ENCODE measurements at regions of chr13 and their contacts with region 1.

Region 1: DNA sequence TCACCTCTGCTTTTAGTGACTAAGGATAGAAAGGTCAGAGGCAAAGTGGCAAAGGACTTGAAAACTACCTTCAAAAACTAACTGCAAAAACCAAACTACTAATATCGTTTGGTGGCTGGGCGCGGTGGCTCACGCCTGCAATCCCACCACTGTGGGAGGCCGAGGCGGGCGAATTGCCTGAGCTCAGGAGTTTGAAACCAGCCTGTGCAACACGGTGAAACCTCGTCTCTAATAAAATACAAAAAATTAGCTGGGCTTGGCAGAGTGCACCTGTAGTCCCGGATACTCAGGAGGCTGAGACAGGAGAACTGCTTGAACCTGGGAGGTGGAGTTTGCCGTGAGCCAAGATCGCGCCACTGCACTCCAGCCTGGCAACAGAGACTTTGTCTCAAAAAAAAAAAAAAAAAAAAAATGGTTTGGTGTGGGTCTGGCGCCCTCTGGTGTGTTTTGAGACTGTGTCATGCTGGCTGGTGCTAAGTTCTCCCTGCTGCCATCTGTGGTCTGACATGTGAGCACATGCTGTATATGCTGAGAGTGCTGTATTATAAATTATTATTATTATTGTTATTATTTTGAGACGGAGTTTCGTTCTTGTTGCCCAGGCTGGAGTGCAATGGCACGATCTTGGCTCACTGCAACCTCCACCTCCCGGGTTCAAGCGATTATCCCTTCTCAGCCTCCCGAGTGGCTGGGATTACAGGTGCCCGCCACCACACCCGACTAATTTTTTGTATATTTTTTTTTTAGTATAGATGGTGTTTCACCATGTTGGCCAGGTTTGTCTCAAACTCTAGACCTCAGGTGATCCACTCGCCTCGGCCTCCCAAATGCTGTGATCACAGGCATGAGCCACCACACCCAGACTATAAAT is 36.0 kb upstream of the RNF17 start:
- DNase-seq: peak; percentile 51 to 59
- H3K4me3 ChIP-seq: no peak overlapping the region
- H3K27ac ChIP-seq: no peak overlapping the region
- H3K4me1 ChIP-seq: no peaks in the 10 kb centered on the region
- H3K27me3 ChIP-seq: no peaks in the 10 kb centered on the region
- CTCF ChIP-seq: peak; percentile 79

Region 2: DNA sequence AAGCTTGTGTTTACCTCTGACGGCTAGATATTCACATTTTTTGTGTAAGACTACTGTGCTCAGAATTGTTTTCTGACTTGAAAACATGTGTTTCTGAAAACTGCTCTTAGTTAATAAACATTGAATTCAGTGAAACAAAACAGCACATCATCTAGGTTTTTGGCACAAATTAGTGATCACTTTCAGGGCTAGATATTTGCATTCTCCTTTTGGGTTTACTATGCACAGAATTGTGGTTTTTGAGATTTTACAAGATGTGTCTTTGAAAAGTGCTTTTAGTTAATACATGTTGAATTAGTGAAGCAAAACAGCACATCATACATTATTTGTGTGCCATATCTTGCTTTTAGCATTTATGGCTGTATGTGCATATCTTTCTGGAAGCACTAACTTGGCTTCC is 207.2 kb before region 1 on chr13:
- CTCF ChIA-PET with region 1: no interaction called
- POLR2A ChIA-PET with region 1: no interaction called
- intact Hi-C with region 1: no loop called
- DNase-seq: no peak
- H3K4me3 ChIP-seq: no peak overlapping the region
- H3K27ac ChIP-seq: no peak overlapping the region
- H3K4me1 ChIP-seq: no peaks in the 10 kb centered on the region
- H3K27me3 ChIP-seq: no peaks in the 10 kb centered on the region
- CTCF ChIP-seq: no peak

Region 3: GRCh38 chr13:24605923-24606372 is 122.0 kb before region 1 on chr13:
- CTCF ChIA-PET with region 1: interaction called, 34 read pairs
- POLR2A ChIA-PET with region 1: no interaction called
- intact Hi-C with region 1: loop called (anchors 5 kb)
- DNase-seq: peak; percentile 12 to 65
- H3K4me3 ChIP-seq: no peak overlapping the region
- H3K27ac ChIP-seq: no peak overlapping the region
- H3K4me1 ChIP-seq: no peaks in the 10 kb centered on the region
- H3K27me3 ChIP-seq: no peaks in the 10 kb centered on the region
- CTCF ChIP-seq: peak; percentile 68

Region 4: GRCh38 chr13:24627099-24627714 is 100.8 kb before region 1 on chr13:
- CTCF ChIA-PET with region 1: interaction called, 6 read pairs
- POLR2A ChIA-PET with region 1: interaction called, 6 read pairs
- intact Hi-C with region 1: loop called (anchors 5 kb)
- DNase-seq: peak in 1 of 2 experiments; percentile 45
- H3K4me3 ChIP-seq: no peak overlapping the region
- H3K27ac ChIP-seq: no peak overlapping the region
- H3K4me1 ChIP-seq: peaks cover 10% of the 10 kb centered on the region
- H3K27me3 ChIP-seq: no peaks in the 10 kb centered on the region
- CTCF ChIP-seq: peak; percentile 71

Region 5: DNA sequence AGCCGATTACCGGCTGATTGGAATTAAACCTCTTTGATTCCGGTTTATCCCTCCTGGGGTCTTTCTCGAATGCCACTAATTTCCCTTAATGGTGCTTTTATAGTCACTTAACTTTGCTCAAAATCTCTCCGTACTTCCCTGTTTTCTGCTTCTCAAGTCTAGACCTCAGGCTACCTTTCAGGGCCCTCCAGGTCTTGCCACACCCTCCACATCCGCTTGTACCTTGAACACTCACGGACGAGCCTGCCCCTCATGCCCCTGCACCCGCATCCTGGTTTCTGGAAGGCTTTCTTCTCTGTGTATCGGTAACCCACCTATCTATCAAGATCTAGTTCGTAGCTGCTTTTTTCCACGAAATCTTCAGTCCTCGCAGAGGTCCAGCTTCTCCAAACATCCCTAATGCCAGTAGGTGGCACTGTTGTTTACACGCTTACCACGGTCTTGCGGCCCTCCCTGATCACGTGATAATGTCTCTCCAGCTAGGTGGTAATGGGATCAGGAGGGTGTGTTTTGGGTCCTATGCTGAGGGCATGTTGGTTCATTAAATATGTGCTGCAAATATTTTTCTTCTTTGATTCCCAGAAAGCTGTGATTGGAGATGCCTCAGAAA is 34.0 kb before region 1 on chr13:
- CTCF ChIA-PET with region 1: interaction called, 18 read pairs
- POLR2A ChIA-PET with region 1: no interaction called
- intact Hi-C with region 1: no loop called
- DNase-seq: peak; percentile 31 to 59
- H3K4me3 ChIP-seq: no peak overlapping the region
- H3K27ac ChIP-seq: no peak overlapping the region
- H3K4me1 ChIP-seq: no peaks in the 10 kb centered on the region
- H3K27me3 ChIP-seq: peaks cover 22% of the 10 kb centered on the region
- CTCF ChIP-seq: peak; percentile 82

Region 6: GRCh38 chr13:25001476-25002206 is 273.7 kb after region 1 on chr13:
- CTCF ChIA-PET with region 1: interaction called, 24 read pairs
- POLR2A ChIA-PET with region 1: no interaction called
- intact Hi-C with region 1: no loop called
- DNase-seq: no peak
- H3K4me3 ChIP-seq: no peak overlapping the region
- H3K27ac ChIP-seq: no peak overlapping the region
- H3K4me1 ChIP-seq: peaks cover 13% of the 10 kb centered on the region
- H3K27me3 ChIP-seq: no peaks in the 10 kb centered on the region
- CTCF ChIP-seq: no peak